ENCODE measurements at regions of chr19 and their contacts with region 1.

Region 1: GRCh38 chr19:33795370-33796163 is 1.1 kb upstream of the KCTD15 start:
- DNase-seq: peak; percentile 90 to 95 (median 95)
- ATAC-seq: peak; percentile 85 to 87
- H3K4me3 ChIP-seq: peak overlapping the region; percentile 72
- H3K27ac ChIP-seq: peak overlapping the region; percentile 81
- H3K4me1 ChIP-seq: peaks cover 2% of the 10 kb centered on the region
- H3K27me3 ChIP-seq: no peaks in the 10 kb centered on the region

Region 2: GRCh38 chr19:33905937-33906576 is 110.5 kb after region 1 on chr19:
- intact Hi-C with region 1: loop called in 2 of 4 experiments (anchors 10 kb)
- DNase-seq: peak; percentile 88 to 93 (median 93)
- ATAC-seq: peak; percentile 94 to 95
- H3K4me3 ChIP-seq: peak overlapping the region; percentile 75
- H3K27ac ChIP-seq: peak overlapping the region; percentile 94
- H3K4me1 ChIP-seq: peaks cover 2% of the 10 kb centered on the region
- H3K27me3 ChIP-seq: no peaks in the 10 kb centered on the region

Region 3: DNA sequence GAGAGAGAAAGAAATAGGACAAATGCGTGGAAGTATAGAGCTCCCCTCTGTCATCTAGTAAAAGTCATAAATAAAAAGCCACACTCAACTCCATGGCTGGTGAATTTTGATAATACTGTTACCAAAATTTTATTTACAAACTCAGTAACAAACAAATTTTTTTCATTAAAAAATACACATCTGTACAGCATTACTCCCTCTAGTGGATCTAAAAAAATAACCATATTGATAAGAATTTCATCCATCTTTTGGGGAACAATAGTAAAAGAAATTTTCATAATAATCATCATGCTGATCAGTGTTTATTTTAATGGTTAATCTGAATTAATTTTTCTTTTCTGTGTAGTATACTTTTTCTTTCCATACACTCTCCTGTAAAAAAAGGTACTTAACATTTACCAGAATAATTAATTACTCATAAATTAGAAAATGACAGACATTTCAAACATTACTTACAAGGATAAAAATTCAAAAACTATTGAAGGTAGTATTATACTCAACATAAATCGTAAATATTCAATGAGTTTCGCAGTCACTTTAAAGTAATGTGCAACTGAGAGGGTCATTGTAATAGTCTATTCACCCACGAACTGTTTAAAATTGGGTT is 203.3 kb after region 1 on chr19:
- intact Hi-C with region 1: loop called in 2 of 4 experiments (anchors 5 kb)
- DNase-seq: no peak
- ATAC-seq: no peak
- H3K4me3 ChIP-seq: no peak overlapping the region
- H3K27ac ChIP-seq: no peak overlapping the region
- H3K4me1 ChIP-seq: no peaks in the 10 kb centered on the region
- H3K27me3 ChIP-seq: peaks cover under 1% of the 10 kb centered on the region

Measured in right cardiac atrium (tissue), 5 donors.